Caco-2 (cell line): ENCODE measurements at regions of chr10 and their contacts with region 1.

Region 1: GRCh38 chr10:114631666-114632417 is 26.2 kb downstream of the ABLIM1 start:
- DNase-seq: peak; percentile 84 to 85
- H3K4me3 ChIP-seq: peak overlapping the region; percentile 54
- H3K4me3 Mint-ChIP-seq: peak overlapping the region; percentile 87
- H3K27ac Mint-ChIP-seq: peak overlapping the region; percentile 85
- H3K4me1 ChIP-seq: peaks cover 52% of the 10 kb centered on the region
- H3K4me1 Mint-ChIP-seq: peaks cover 52% of the 10 kb centered on the region
- H3K27me3 ChIP-seq: no peaks in the 10 kb centered on the region
- H3K27me3 Mint-ChIP-seq: no peaks in the 10 kb centered on the region
- CTCF ChIP-seq: no peak

Region 2: GRCh38 chr10:114645729-114646128 is 13.9 kb after region 1 on chr10:
- CTCF ChIA-PET with region 1: interaction called, 3 read pairs
- POLR2A ChIA-PET with region 1: no interaction called
- intact Hi-C with region 1: loop called (anchors 1 kb)
- DNase-seq: no peak
- H3K4me3 ChIP-seq: no peak overlapping the region
- H3K4me3 Mint-ChIP-seq: no peak overlapping the region
- H3K27ac Mint-ChIP-seq: peak overlapping the region; percentile 51
- H3K4me1 ChIP-seq: peaks cover 56% of the 10 kb centered on the region
- H3K4me1 Mint-ChIP-seq: peaks cover 49% of the 10 kb centered on the region
- H3K27me3 ChIP-seq: no peaks in the 10 kb centered on the region
- H3K27me3 Mint-ChIP-seq: no peaks in the 10 kb centered on the region
- CTCF ChIP-seq: no peak

Region 3: DNA sequence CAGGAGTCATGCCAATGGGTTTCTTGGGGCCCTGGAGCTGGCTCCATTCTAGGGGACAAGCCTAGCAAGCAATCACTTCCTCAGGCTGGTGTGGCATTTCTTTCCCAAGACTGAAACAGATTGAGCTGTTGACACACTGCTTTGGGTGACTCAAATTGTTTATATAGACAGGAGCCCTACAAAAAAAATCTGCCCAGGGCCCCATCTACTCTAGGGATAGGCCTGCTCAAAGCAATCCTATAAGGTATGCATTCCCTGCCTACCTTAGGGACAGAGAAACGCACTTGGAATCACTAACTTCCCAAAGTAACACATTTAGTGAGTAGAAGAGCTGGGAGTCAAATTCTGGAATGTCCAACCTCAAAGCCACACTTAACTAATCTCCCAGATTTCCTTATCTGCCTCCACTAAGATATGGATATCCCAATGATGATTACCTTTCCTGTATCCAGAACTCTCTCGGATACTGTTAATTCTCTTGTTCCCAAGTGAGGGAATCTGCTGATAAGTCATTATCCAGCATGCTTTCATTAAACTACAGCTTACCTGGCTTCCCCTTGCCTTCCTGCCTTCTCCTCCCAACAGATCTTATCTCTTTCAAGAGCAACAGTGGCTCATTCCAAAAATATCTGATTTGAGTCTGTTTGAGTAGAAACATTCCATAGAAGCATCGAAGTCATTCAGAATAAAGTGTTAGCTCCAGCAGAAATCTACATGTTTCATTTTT is 23.2 kb after region 1 on chr10:
- CTCF ChIA-PET with region 1: interaction called, 5 read pairs
- POLR2A ChIA-PET with region 1: interaction called, 3 read pairs
- intact Hi-C with region 1: loop called (anchors 1 kb)
- DNase-seq: peak; percentile 58 to 65
- H3K4me3 ChIP-seq: no peak overlapping the region
- H3K4me3 Mint-ChIP-seq: peak overlapping the region; percentile 37
- H3K27ac Mint-ChIP-seq: peak overlapping the region; percentile 54
- H3K4me1 ChIP-seq: peaks cover 46% of the 10 kb centered on the region
- H3K4me1 Mint-ChIP-seq: peaks cover 26% of the 10 kb centered on the region
- H3K27me3 ChIP-seq: no peaks in the 10 kb centered on the region
- H3K27me3 Mint-ChIP-seq: no peaks in the 10 kb centered on the region
- CTCF ChIP-seq: no peak

Region 4: DNA sequence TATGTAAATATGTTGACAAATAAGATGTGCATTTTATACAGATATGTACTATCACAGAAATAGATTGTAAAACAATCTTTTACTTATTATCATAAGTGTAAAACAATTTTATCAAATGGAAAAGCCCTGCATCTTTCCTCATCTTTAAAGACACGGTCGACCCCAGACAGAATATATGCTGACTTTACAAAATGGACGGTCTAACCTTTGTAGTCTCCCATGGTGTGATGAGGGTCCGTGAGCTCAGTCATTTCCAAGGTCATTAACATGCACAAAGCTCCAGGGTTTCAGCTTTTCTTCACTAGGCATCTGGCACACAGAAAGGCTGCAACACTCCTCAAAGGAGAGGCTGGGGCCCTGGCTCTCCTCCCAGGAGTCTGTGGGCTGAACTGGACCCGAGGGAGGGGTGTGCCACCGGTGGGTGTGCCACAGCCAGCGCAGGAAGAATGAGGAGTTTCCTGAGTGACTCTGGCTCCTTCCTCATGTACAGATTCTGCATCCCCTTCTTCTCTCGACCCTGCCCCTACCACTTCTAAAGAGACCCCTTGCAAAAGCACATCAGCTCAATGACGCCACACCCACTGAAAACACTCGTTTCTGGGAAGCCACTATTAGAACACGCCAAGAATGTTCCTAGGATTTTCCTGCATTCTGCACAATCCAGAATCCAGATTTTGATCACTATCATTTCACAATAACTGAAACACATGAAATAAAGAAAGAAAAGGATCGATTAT is 52.4 kb after region 1 on chr10:
- CTCF ChIA-PET with region 1: no interaction called
- POLR2A ChIA-PET with region 1: interaction called, 3 read pairs
- intact Hi-C with region 1: loop called (anchors 1 kb)
- DNase-seq: peak; percentile 42 to 53
- H3K4me3 ChIP-seq: peak overlapping the region; percentile 20
- H3K4me3 Mint-ChIP-seq: peak overlapping the region; percentile 69
- H3K27ac Mint-ChIP-seq: peak overlapping the region; percentile 75
- H3K4me1 ChIP-seq: peaks cover 42% of the 10 kb centered on the region
- H3K4me1 Mint-ChIP-seq: peaks cover 30% of the 10 kb centered on the region
- H3K27me3 ChIP-seq: no peaks in the 10 kb centered on the region
- H3K27me3 Mint-ChIP-seq: no peaks in the 10 kb centered on the region
- CTCF ChIP-seq: no peak

Region 5: GRCh38 chr10:114694752-114695151 is 62.9 kb after region 1 on chr10:
- CTCF ChIA-PET with region 1: interaction called, 3 read pairs
- POLR2A ChIA-PET with region 1: no interaction called
- intact Hi-C with region 1: loop called (anchors 2 kb)
- DNase-seq: peak; percentile 55 to 69
- H3K4me3 ChIP-seq: no peak overlapping the region
- H3K4me3 Mint-ChIP-seq: no peak overlapping the region
- H3K27ac Mint-ChIP-seq: no peak overlapping the region
- H3K4me1 ChIP-seq: no peaks in the 10 kb centered on the region
- H3K4me1 Mint-ChIP-seq: peaks cover 6% of the 10 kb centered on the region
- H3K27me3 ChIP-seq: no peaks in the 10 kb centered on the region
- H3K27me3 Mint-ChIP-seq: no peaks in the 10 kb centered on the region
- CTCF ChIP-seq: peak; percentile 69 to 74

Region 6: DNA sequence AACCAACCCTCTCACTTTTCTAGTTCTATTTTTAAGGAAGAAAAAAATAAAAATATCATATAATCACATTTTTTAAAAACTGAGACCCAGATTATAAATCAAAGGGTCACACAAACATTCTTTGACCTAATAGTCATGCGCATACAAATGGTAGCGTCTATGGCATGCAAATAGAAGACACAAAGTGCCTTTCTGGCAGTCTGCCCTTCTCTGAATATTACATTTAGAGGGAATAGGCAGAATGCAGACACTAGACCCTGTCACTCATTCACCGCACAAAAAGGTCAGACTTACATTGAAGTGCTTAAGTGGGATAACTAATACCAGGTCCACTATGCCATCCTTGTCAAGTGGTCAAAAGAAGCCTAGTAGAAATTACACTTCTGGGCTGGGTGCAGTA is 163.2 kb after region 1 on chr10:
- CTCF ChIA-PET with region 1: no interaction called
- POLR2A ChIA-PET with region 1: no interaction called
- intact Hi-C with region 1: no loop called
- DNase-seq: no peak
- H3K4me3 ChIP-seq: no peak overlapping the region
- H3K4me3 Mint-ChIP-seq: no peak overlapping the region
- H3K27ac Mint-ChIP-seq: no peak overlapping the region
- H3K4me1 ChIP-seq: no peaks in the 10 kb centered on the region
- H3K4me1 Mint-ChIP-seq: no peaks in the 10 kb centered on the region
- H3K27me3 ChIP-seq: no peaks in the 10 kb centered on the region
- H3K27me3 Mint-ChIP-seq: peaks cover 17% of the 10 kb centered on the region
- CTCF ChIP-seq: no peak